K562 (cell line): ENCODE measurements at regions of chr5 and their contacts with region 1.

Region 1: GRCh38 chr5:151252762-151253604 is at the start of gene GM2A:
- DNase-seq: peak; percentile 99
- ATAC-seq: peak; percentile 98
- H3K4me3 ChIP-seq: peak within 1 kb of the TSS; percentile 57
- H3K27ac ChIP-seq: peak within 1 kb of the TSS; percentile 60
- H3K4me1 ChIP-seq: peaks cover 9 to 18% of the 10 kb centered on the region in 2 experiments; a peak in 4 of 5 replicates
- H3K27me3 ChIP-seq: no peaks in the 10 kb centered on the region
- CTCF ChIP-seq: no peak
- EP300 ChIP-seq: no peak
- POLR2A ChIP-seq: peak; percentile 27
- RAD21 ChIP-seq: no peak
- polyA plus RNA-seq, gene GM2A: 7.1 to 10.0 TPM

Region 2: DNA sequence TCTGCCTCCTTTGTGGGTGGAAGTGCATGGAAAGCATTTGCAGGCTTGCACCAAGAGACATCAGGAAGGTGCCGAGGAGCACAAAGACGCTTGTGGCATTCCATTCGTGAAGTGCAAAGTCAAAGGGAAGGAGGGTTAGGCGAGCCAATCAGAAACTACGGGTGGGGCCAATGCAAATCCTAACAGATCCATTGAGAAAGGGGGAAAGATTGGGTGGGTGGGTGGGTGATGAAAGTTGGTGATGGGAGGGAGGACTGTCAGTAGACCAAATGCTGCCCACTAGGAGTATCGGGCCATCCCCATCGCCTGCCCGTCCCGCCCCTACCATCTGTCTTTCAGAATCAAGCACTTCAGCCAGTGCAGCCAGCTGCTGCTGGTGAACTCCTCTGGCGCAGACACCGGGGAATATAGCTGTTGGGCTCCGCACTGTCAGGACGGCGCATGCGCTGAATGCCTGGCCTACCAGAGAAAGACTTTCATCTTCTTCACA is 78.3 kb before region 1 on chr5:
- CTCF ChIA-PET with region 1: no interaction called
- POLR2A ChIA-PET with region 1: no interaction called
- in situ Hi-C with region 1: no loop called
- intact Hi-C with region 1: no loop called
- DNase-seq: no peak
- ATAC-seq: no peak
- H3K4me3 ChIP-seq: no peak overlapping the region
- H3K27ac ChIP-seq: no peak overlapping the region
- H3K4me1 ChIP-seq: no peaks in the 10 kb centered on the region
- H3K27me3 ChIP-seq: peaks cover 4 to 14% of the 10 kb centered on the region in 2 experiments; a peak in 4 of 5 replicates
- CTCF ChIP-seq: no peak
- EP300 ChIP-seq: no peak
- POLR2A ChIP-seq: no peak
- RAD21 ChIP-seq: no peak

Region 3: DNA sequence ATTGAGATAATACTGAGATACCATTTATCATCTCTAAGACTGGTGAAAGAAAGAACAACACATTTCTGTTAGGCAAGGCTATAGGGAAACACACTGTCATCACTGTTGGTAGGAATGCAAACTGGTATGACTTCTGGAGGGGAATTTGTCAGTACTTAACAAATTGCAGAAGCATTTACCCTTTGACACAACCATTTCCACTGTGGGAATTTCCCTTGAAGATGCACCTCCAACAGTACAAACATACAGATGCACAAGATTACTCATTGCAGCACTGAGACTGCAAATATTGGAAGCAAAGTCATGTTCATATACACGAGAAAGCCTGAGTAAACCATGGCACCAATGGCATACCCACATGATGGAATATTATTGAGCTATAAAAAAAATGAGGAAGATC is 17.6 kb after region 1 on chr5:
- CTCF ChIA-PET with region 1: no interaction called
- POLR2A ChIA-PET with region 1: interaction called, 11 read pairs
- in situ Hi-C with region 1: no loop called
- intact Hi-C with region 1: no loop called
- DNase-seq: no peak
- ATAC-seq: no peak
- H3K4me3 ChIP-seq: no peak overlapping the region
- H3K27ac ChIP-seq: no peak overlapping the region
- H3K4me1 ChIP-seq: no peaks in the 10 kb centered on the region
- H3K27me3 ChIP-seq: peaks cover 0 to 6% of the 10 kb centered on the region in 2 experiments; a peak in 2 of 5 replicates
- CTCF ChIP-seq: no peak
- EP300 ChIP-seq: no peak
- POLR2A ChIP-seq: no peak
- RAD21 ChIP-seq: no peak